Psoas muscle (tissue), 8 donors: ENCODE measurements at regions of chr4 and their contacts with region 1.

Region 1: DNA sequence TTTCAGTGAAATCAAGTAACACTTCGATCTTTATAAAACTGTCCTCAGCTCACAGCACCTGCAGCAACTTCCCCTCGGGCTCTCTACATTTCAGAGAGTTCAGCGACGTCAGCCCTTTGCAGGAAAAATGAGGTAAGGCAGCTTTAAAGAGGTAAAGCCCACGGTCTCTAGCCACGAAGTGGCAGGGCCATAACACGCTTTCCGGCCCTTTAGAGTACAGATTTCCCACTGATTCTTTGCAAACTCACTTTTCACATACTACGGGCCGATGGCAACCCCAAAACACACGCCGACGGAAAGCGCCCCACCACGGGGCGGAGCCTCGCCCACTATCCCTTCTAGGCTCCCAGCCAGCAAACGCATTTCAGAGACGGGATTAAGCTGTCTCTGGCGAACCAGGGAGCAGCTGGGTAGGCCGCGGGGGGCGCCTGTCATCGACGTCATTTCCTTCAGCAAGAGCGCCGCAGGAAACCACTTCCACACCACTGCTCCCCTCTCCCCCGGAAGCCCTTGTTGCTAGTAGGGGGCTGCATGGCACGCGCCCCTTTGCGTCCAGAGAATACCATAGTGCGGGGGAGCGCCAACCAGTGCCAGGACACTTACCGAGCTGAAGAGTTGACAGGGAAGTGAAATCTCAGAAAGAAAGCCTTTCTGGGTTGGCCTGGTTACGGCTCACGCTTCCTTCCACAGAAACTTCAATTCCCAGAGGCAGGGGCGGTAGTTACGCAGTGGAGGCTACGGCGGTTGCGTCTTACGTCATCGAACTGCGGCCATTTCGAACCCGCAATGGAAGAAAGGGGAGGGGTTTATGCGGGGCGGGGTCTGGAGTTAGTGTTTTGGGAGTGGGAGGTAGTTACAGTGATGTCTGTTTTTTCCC is at the start of gene TRMT10A:
- DNase-seq: peak; percentile 98 to 99
- ATAC-seq: peak; percentile 89 to 95 (median 91)
- H3K4me3 ChIP-seq: peak within 1 kb of the TSS; percentile 85
- H3K27ac ChIP-seq: peak within 1 kb of the TSS; percentile 91
- H3K4me1 ChIP-seq: peaks cover 21% of the 10 kb centered on the region
- H3K27me3 ChIP-seq: no peaks in the 10 kb centered on the region
- CTCF ChIP-seq: no peak
- total RNA-seq, gene TRMT10A: 2.9 to 4.6 (median 4.3) TPM

Region 2: DNA sequence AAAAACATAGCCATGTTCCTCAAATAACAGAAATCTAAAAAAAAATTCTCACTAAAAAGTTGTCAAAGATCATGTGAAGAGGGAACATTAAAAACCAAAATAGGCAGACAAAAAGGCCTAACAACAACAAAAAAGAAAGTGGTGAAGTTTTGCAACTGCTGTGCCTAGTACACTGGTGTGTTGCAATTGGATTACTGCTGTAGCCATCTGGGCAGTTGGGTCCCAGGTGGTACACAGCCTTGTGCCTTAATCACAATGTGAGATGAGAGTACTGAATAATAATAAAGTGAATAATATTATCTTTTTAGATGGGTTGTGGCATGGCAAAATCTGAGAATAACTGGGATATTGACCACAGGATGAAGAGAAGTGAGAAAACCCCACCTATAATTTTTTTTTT is 82.1 kb after region 1 on chr4:
- intact Hi-C with region 1: loop called (anchors 2 to 5 kb)
- DNase-seq: no peak
- ATAC-seq: peak; percentile 23 to 57 (median 54)
- H3K4me3 ChIP-seq: peak overlapping the region; percentile 78
- H3K27ac ChIP-seq: peak overlapping the region; percentile 99
- H3K4me1 ChIP-seq: peaks cover 54% of the 10 kb centered on the region
- H3K27me3 ChIP-seq: no peaks in the 10 kb centered on the region
- CTCF ChIP-seq: no peak

Region 3: DNA sequence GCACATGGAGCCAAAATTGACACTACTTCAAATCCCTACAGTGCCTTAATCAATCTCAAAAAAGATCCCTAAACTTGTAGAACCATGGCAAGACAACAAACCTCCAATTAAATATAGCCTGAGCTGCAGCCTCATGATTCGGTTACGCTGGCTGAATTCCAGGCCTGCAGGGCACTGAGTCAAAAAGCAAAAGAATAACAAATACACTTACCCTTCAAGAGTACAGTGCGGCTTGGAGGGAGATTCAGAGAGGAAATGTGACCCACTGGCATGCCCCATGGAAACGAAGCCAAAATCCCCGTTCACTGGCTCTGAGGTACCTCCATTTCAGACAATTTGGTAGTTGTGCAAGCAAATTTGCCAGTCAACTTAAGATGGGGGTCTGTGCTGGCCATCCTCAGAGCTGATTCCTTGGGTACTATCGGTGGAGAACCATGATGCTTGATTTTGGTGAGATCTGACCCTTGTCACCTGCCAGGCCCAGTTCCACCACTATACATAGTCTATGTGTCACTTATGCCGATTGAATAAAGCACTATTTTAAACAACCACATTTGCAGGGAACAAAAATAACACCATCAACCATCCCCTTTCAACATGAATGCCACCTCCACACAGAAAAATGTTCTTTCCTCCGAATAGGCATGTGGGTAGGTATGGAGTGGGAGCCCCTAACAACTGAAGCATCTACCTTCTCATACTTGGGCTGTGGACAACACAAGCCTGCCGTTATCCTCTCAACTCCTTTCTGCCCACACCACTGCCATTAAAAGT is 91.9 kb after region 1 on chr4:
- intact Hi-C with region 1: loop called in 1 of 2 experiments (anchors 5 kb)
- DNase-seq: peak in 1 of 2 donors; percentile 83
- ATAC-seq: peak; percentile 28 to 54 (median 51)
- H3K4me3 ChIP-seq: peak overlapping the region; percentile 78
- H3K27ac ChIP-seq: peak overlapping the region; percentile 99
- H3K4me1 ChIP-seq: peaks cover 30% of the 10 kb centered on the region
- H3K27me3 ChIP-seq: no peaks in the 10 kb centered on the region
- CTCF ChIP-seq: no peak

Region 4: GRCh38 chr4:99723612-99724011 is 160.1 kb after region 1 on chr4:
- intact Hi-C with region 1: loop called in 1 of 2 experiments (anchors 1 kb)
- DNase-seq: peak; percentile 68 to 88
- ATAC-seq: peak; percentile 98 to 99 (median 99)
- H3K4me3 ChIP-seq: peak overlapping the region; percentile 3
- H3K27ac ChIP-seq: peak overlapping the region; percentile 93
- H3K4me1 ChIP-seq: peaks cover 56% of the 10 kb centered on the region
- H3K27me3 ChIP-seq: no peaks in the 10 kb centered on the region
- CTCF ChIP-seq: no peak

Region 5: GRCh38 chr4:99808260-99808857 is 244.8 kb after region 1 on chr4:
- intact Hi-C with region 1: loop called (anchors 1 to 2 kb)
- DNase-seq: peak; percentile 47 to 71
- ATAC-seq: peak; percentile 88 to 96 (median 92)
- H3K4me3 ChIP-seq: no peak overlapping the region
- H3K27ac ChIP-seq: peak overlapping the region; percentile 69
- H3K4me1 ChIP-seq: peaks cover 31% of the 10 kb centered on the region
- H3K27me3 ChIP-seq: no peaks in the 10 kb centered on the region
- CTCF ChIP-seq: peak; percentile 84

Region 6: GRCh38 chr4:99894161-99894997 is 330.8 kb after region 1 on chr4 and contains the start of gene LAMTOR3:
- intact Hi-C with region 1: loop called in 1 of 2 experiments (anchors 5 kb)
- DNase-seq: peak; percentile 90 to 96
- ATAC-seq: peak; percentile 99
- H3K4me3 ChIP-seq: peak within 1 kb of the TSS; percentile 86
- H3K27ac ChIP-seq: peak within 1 kb of the TSS; percentile 82
- H3K4me1 ChIP-seq: peaks cover 17% of the 10 kb centered on the region
- H3K27me3 ChIP-seq: no peaks in the 10 kb centered on the region
- CTCF ChIP-seq: no peak
- total RNA-seq, gene LAMTOR3: 21.6 to 25.8 (median 23.2) TPM

Region 7: GRCh38 chr4:99949034-99949998 is 385.8 kb after region 1 on chr4:
- intact Hi-C with region 1: loop called (anchors 1 to 5 kb)
- DNase-seq: peak; percentile 83 to 88
- ATAC-seq: peak; percentile 41 to 64 (median 52)
- H3K4me3 ChIP-seq: peak overlapping the region; percentile 89
- H3K27ac ChIP-seq: peak overlapping the region; percentile 95
- H3K4me1 ChIP-seq: peaks cover 31% of the 10 kb centered on the region
- H3K27me3 ChIP-seq: no peaks in the 10 kb centered on the region
- CTCF ChIP-seq: peak; percentile 79

Region 8: DNA sequence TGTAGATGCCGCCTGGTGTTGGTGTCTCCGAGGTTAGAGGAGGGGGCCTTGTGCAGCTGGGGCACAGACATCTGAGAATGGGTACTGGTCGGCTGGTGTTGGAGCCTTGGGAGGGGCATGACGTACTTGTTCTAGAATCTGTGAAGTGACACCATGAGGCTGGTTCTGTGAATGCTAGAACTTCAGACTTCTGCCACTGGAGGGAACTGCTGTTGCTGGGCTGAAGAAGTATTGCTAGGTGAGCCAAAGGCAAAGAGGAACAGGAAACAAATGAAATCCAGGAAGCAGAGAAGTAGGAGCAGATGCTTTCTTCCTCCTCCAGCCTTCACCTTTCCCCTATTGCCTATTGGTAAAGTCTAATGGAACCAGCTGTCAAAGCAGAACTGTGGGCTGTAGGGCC is 747.6 kb after region 1 on chr4:
- intact Hi-C with region 1: no loop called
- DNase-seq: no peak
- ATAC-seq: peak; percentile 35 to 80 (median 52)
- H3K4me3 ChIP-seq: no peak overlapping the region
- H3K27ac ChIP-seq: no peak overlapping the region
- H3K4me1 ChIP-seq: peaks cover 29% of the 10 kb centered on the region
- H3K27me3 ChIP-seq: no peaks in the 10 kb centered on the region
- CTCF ChIP-seq: peak; percentile 32